GM12878 (cell line): ENCODE measurements at regions of chr16 and their contacts with region 1.

Region 1: GRCh38 chr16:84663433-84664101 is 15.3 kb downstream of the KLHL36 start:
- DNase-seq: peak; percentile 76
- ATAC-seq: peak; percentile 96
- H3K4me3 ChIP-seq: no peak overlapping the region
- H3K27ac ChIP-seq: 0 out of 2 replicates have a peak overlapping the region, but pooled peaks have one; percentile 38
- H3K4me1 ChIP-seq: peaks cover 22% of the 10 kb centered on the region
- H3K27me3 ChIP-seq: no peaks in the 10 kb centered on the region
- CTCF ChIP-seq: no peak
- EP300 ChIP-seq: no peak
- POLR2A ChIP-seq: 0 out of 2 replicates have a peak, but pooled peaks have one; percentile 18
- RAD21 ChIP-seq: no peak

Region 2: GRCh38 chr16:84332975-84333684 is 330.4 kb before region 1 on chr16:
- CTCF ChIA-PET with region 1: no interaction called
- POLR2A ChIA-PET with region 1: no interaction called
- RAD21 ChIA-PET with region 1: no interaction called
- SMC1A ChIA-PET with region 1: no interaction called
- in situ Hi-C with region 1: no loop called
- intact Hi-C with region 1: no loop called
- DNase-seq: no peak
- ATAC-seq: no peak
- H3K4me3 ChIP-seq: no peak overlapping the region
- H3K27ac ChIP-seq: no peak overlapping the region
- H3K4me1 ChIP-seq: no peaks in the 10 kb centered on the region
- H3K27me3 ChIP-seq: peaks cover 0 to under 1% of the 10 kb centered on the region in 2 experiments; a peak in 1 of 4 replicates
- CTCF ChIP-seq: no peak
- EP300 ChIP-seq: no peak
- POLR2A ChIP-seq: no peak
- RAD21 ChIP-seq: no peak

Region 3: GRCh38 chr16:84647828-84648594 is 15.6 kb before region 1 on chr16 and contains the start of gene KLHL36:
- CTCF ChIA-PET with region 1: interaction called, 14 read pairs
- POLR2A ChIA-PET with region 1: interaction called, 10 read pairs
- RAD21 ChIA-PET with region 1: interaction called, 6 read pairs
- SMC1A ChIA-PET with region 1: interaction called, 5 read pairs
- in situ Hi-C with region 1: no loop called
- intact Hi-C with region 1: no loop called
- DNase-seq: no peak
- ATAC-seq: peak; percentile 84
- H3K4me3 ChIP-seq: peak within 1 kb of the TSS; percentile 81
- H3K27ac ChIP-seq: peak within 1 kb of the TSS; percentile 79
- H3K4me1 ChIP-seq: peaks cover 21% of the 10 kb centered on the region
- H3K27me3 ChIP-seq: no peaks in the 10 kb centered on the region
- CTCF ChIP-seq: peak in 2 of 3 experiments; percentile 3 to 9; a peak in 1 of 6 replicates
- EP300 ChIP-seq: no peak
- POLR2A ChIP-seq: peak; percentile 68
- RAD21 ChIP-seq: no peak
- polyA plus RNA-seq, gene KLHL36: 2.6 to 2.7 TPM

Region 4: GRCh38 chr16:84699712-84700445 is 36.3 kb after region 1 on chr16 and contains the start of gene USP10:
- CTCF ChIA-PET with region 1: interaction called, 11 read pairs
- POLR2A ChIA-PET with region 1: interaction called, 7 read pairs
- RAD21 ChIA-PET with region 1: interaction called, 4 read pairs
- SMC1A ChIA-PET with region 1: interaction called, 4 read pairs
- in situ Hi-C with region 1: no loop called
- intact Hi-C with region 1: no loop called
- DNase-seq: no peak
- ATAC-seq: peak; percentile 82
- H3K4me3 ChIP-seq: peak within 1 kb of the TSS; percentile 91
- H3K27ac ChIP-seq: peak within 1 kb of the TSS; percentile 86
- H3K4me1 ChIP-seq: peaks cover 3% of the 10 kb centered on the region; the same call in 1 of the 2 replicates
- H3K27me3 ChIP-seq: no peaks in the 10 kb centered on the region
- CTCF ChIP-seq: no peak
- EP300 ChIP-seq: no peak
- POLR2A ChIP-seq: peak; percentile 93
- RAD21 ChIP-seq: no peak
- polyA plus RNA-seq, gene USP10: 46.1 to 47.7 TPM